ENCODE measurements at regions of chr5 and their contacts with region 1.

Region 1: DNA sequence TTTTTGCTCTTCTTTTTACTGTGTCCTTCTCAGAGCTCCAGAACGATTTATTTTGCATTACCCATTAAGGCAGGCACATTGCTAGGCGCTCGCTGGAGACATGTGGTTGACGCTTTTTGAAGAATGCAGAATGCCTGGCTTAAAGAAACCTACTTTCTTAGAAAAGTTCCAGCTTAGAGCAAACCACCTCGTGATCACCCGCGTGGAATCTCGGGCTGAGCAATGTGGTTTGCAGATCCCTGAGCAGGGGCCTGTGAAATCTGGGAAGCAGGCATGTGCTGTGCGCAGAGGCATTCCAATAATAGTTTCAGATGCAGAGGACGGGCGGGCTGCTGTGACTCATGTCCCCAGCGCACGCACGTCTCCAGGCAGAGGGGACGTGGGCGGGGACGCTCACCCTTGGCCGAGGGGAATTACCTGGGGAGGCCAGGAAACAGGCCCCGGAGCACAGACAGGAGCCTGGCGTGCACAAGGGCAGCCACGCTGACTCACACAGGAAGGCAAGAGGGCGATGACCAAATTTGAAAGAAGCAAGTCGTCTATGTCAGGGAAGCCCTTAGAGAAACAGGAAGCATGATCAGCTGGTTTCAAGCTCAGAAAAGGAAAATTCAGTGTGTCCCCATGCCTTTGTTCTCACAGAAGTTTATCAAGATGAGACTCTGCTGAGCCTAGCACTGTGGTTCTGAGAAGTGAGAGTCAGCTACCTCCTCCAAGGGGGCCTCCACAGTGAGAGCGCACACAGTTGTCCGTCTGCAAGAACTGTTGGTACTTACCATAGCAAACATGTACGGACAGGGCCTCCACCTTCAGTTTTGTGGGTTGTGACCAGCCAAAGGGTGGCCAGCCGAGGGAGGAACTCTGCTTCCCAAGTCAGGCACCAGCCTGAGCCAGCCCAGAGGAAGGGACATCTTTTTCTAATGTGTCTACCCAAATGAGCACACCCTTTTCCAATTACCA is 218.6 kb downstream of the PIK3R1 start:
- DNase-seq: peak; percentile 88
- H3K4me3 Mint-ChIP-seq: peak overlapping the region; percentile 16
- H3K27ac Mint-ChIP-seq: peak overlapping the region; percentile 88
- H3K4me1 Mint-ChIP-seq: peaks cover 53% of the 10 kb centered on the region
- H3K27me3 Mint-ChIP-seq: peaks cover 30% of the 10 kb centered on the region

Region 2: DNA sequence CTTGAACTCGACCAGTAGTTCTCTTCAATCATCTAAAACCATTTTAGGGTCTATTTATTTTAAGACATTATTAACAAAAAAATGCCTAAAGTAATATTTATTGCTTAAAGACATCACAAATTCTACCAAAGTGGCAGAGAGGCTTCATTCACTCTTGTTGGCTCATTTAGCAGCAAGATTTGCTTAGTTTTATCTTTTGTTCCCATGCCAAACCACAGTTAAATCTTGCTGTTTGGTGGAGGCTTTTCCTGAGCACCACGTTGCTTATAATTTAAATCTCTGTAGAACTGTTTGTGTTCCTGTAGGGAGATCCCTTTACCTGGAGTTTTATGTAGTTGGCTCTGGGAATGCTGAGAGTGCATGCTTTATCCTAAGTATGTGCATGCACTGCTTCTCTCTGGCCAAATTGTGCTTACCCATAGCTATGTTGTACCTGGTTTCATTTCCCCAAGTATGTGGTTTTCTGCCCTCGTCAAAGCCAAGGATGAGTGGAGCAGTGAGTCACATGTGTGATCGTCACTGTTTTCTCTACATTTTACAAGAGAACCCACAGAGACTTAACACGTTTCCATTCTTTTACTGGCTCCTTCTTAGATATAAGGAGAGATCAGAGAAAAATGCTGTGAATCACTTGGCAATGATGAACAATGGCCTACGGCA is 1880.2 kb before region 1 on chr5:
- intact Hi-C with region 1: loop called (anchors 1 kb)
- DNase-seq: peak; percentile 50
- H3K4me3 Mint-ChIP-seq: no peak overlapping the region
- H3K27ac Mint-ChIP-seq: peak overlapping the region; percentile 26
- H3K4me1 Mint-ChIP-seq: peaks cover 32% of the 10 kb centered on the region
- H3K27me3 Mint-ChIP-seq: no peaks in the 10 kb centered on the region

Region 3: GRCh38 chr5:68215208-68215897 is 218.8 kb before region 1 on chr5 and contains the start of gene PIK3R1:
- intact Hi-C with region 1: loop called (anchors 1 kb)
- DNase-seq: peak; percentile 88
- H3K4me3 Mint-ChIP-seq: peak within 1 kb of the TSS; percentile 91
- H3K27ac Mint-ChIP-seq: peak within 1 kb of the TSS; percentile 93
- H3K4me1 Mint-ChIP-seq: peaks cover 37% of the 10 kb centered on the region
- H3K27me3 Mint-ChIP-seq: no peaks in the 10 kb centered on the region
- total RNA-seq, gene PIK3R1: 43.3 and 46.2 TPM in 2 replicates

Region 4: GRCh38 chr5:68369457-68370125 is 64.6 kb before region 1 on chr5:
- intact Hi-C with region 1: loop called (anchors 1 kb)
- DNase-seq: peak; percentile 48
- H3K4me3 Mint-ChIP-seq: peak overlapping the region; percentile 46
- H3K27ac Mint-ChIP-seq: peak overlapping the region; percentile 79
- H3K4me1 Mint-ChIP-seq: peaks cover 61% of the 10 kb centered on the region
- H3K27me3 Mint-ChIP-seq: peaks cover 1% of the 10 kb centered on the region

Region 5: DNA sequence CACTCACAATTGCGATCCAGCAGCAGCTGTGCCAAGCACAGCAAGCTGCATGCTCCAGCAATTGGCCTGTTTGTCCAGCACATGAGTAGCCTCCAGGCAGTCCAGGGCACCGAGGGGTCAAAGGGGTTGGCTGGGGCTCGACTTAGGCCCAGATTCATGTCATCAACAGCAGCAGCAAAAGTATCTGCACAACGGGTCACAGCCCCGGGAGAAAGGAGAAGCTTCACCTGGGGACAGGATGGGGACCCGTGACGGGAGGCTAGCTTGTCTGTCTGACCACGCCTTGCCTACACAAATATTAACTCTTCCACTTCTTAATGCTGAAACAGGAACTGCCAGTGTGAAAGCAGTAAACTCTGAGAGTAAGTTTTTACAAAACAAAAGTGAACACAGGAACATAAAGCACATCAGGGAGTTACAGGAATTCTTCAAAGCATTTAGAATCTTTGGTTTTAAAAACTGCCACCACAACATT is 27.4 kb before region 1 on chr5:
- intact Hi-C with region 1: loop called (anchors 1 kb)
- DNase-seq: no peak
- H3K4me3 Mint-ChIP-seq: peak overlapping the region; percentile 47
- H3K27ac Mint-ChIP-seq: peak overlapping the region; percentile 81
- H3K4me1 Mint-ChIP-seq: peaks cover 30% of the 10 kb centered on the region
- H3K27me3 Mint-ChIP-seq: peaks cover 2% of the 10 kb centered on the region

Region 6: GRCh38 chr5:69093771-69094482 is 659.7 kb after region 1 on chr5 and contains the start of gene SLC30A5:
- intact Hi-C with region 1: loop called (anchors 1 kb)
- DNase-seq: peak; percentile 99
- H3K4me3 Mint-ChIP-seq: peak within 1 kb of the TSS; percentile 97
- H3K27ac Mint-ChIP-seq: peak within 1 kb of the TSS; percentile 94
- H3K4me1 Mint-ChIP-seq: peaks cover 44% of the 10 kb centered on the region
- H3K27me3 Mint-ChIP-seq: no peaks in the 10 kb centered on the region
- total RNA-seq, gene SLC30A5: 60.8 and 67.4 TPM in 2 replicates

Measured in activated T-helper 1 cell treated with anti-CD3 and anti-CD28 coated beads, Interleukin-12 subunit alpha, Interleukin-12 subunit beta, Interleukin-2, Interleukin-4 antibody, amounts not matched to agents 30 ng/mL and 10 ng/mL and 1 ng/mL, durations not matched to agents 14 hours and 24 hours and 36 hours (primary cell).